IMR-90 (cell line): ENCODE measurements at regions of chr15 and their contacts with region 1.

Region 1: DNA sequence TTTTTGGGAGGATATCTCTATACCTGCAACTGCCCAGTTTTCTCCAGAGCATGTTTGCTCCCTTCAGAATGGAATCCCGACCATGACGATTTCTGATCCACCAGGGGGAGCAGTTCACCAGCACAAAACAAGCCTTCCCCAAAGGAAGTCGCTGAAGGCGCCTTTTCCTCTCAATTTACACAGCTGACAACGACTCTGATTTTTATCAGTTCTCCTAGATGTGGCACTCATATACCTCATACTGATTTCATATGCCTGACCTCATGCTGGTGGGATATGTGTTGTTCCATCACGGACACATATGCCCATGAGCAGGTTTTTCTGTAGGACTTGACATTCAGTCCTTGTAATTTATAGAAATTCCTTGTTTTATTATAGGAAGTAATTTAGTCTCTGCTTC is 1028.2 kb downstream of the MCTP2 start:
- DNase-seq: peak; percentile 83
- ATAC-seq: peak; percentile 70
- H3K4me3 ChIP-seq: no peak overlapping the region
- H3K27ac ChIP-seq: no peak overlapping the region
- H3K4me1 ChIP-seq: peaks cover 17% of the 10 kb centered on the region
- H3K27me3 ChIP-seq: no peaks in the 10 kb centered on the region
- CTCF ChIP-seq: peak; percentile 86
- POLR2A ChIP-seq: no peak; the same call in 1 of the 2 replicates
- RAD21 ChIP-seq: peak; percentile 98

Region 2: GRCh38 chr15:94607176-94607654 is 652.3 kb before region 1 on chr15:
- CTCF ChIA-PET with region 1: no interaction called
- POLR2A ChIA-PET with region 1: no interaction called
- dilution Hi-C with region 1: no loop called
- in situ Hi-C with region 1: no loop called
- intact Hi-C with region 1: no loop called
- DNase-seq: no peak
- ATAC-seq: no peak
- H3K4me3 ChIP-seq: no peak overlapping the region
- H3K27ac ChIP-seq: no peak overlapping the region
- H3K4me1 ChIP-seq: no peaks in the 10 kb centered on the region
- H3K27me3 ChIP-seq: no peaks in the 10 kb centered on the region
- CTCF ChIP-seq: no peak
- POLR2A ChIP-seq: no peak
- RAD21 ChIP-seq: no peak

Region 3: GRCh38 chr15:95025924-95026728 is 233.4 kb before region 1 on chr15:
- CTCF ChIA-PET with region 1: interaction called, 3 read pairs
- POLR2A ChIA-PET with region 1: no interaction called
- dilution Hi-C with region 1: no loop called
- in situ Hi-C with region 1: no loop called
- intact Hi-C with region 1: loop called (anchors 2 kb)
- DNase-seq: peak; percentile 61
- ATAC-seq: peak; percentile 93
- H3K4me3 ChIP-seq: no peak overlapping the region
- H3K27ac ChIP-seq: no peak overlapping the region
- H3K4me1 ChIP-seq: no peaks in the 10 kb centered on the region
- H3K27me3 ChIP-seq: peaks cover 2% of the 10 kb centered on the region; the same call in 1 of the 2 replicates
- CTCF ChIP-seq: peak; percentile 77
- POLR2A ChIP-seq: no peak
- RAD21 ChIP-seq: peak; percentile 81

Region 4: GRCh38 chr15:95409626-95410310 is 150.3 kb after region 1 on chr15:
- CTCF ChIA-PET with region 1: interaction called, 4 read pairs
- POLR2A ChIA-PET with region 1: no interaction called
- dilution Hi-C with region 1: no loop called
- in situ Hi-C with region 1: no loop called
- intact Hi-C with region 1: loop called (anchors 5 kb)
- DNase-seq: peak; percentile 32
- ATAC-seq: no peak
- H3K4me3 ChIP-seq: no peak overlapping the region
- H3K27ac ChIP-seq: no peak overlapping the region
- H3K4me1 ChIP-seq: peaks cover 6% of the 10 kb centered on the region
- H3K27me3 ChIP-seq: no peaks in the 10 kb centered on the region
- CTCF ChIP-seq: no peak
- POLR2A ChIP-seq: no peak
- RAD21 ChIP-seq: no peak

Region 5: DNA sequence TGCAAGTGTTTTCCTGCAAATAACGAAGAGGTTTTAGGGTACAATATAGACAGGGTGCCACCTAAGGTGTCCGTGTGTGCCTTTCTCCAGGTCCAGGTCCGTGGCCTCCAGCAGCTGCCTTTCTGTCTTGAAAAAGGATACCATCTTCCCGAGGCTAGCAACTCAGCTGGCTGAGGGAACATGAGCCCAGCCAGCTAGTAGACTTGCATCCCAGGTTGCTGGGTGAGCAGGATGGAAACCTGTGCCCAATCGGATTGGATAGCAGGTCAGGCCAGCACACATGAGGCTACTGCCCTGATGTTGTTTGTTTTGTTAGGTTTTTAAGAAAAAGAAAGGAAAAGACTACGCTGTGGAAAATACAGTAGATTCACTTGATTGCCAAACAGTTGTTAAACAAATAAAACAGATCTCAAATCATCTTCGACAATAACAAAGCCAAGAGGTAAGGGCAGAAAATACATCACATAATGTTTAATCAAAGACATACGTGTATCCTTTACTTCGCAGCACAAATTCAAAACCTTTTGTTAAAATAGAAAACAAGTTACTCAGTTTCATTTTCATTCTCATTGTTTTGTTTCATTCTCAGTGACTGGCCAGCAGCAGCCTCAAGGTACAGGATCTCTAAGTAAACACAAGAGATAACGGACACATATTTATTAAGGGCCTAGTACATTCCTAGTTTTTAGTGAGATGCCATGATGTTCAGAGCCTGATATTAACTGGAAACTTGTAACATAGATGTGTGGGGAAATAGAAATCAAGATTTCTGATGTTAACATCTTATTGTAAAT is 409.8 kb after region 1 on chr15:
- CTCF ChIA-PET with region 1: no interaction called
- POLR2A ChIA-PET with region 1: no interaction called
- dilution Hi-C with region 1: no loop called
- in situ Hi-C with region 1: no loop called
- intact Hi-C with region 1: loop called (anchors 10 kb)
- DNase-seq: no peak
- ATAC-seq: peak; percentile 40
- H3K4me3 ChIP-seq: no peak overlapping the region
- H3K27ac ChIP-seq: no peak overlapping the region
- H3K4me1 ChIP-seq: peaks cover 4% of the 10 kb centered on the region; the same call in 1 of the 2 replicates
- H3K27me3 ChIP-seq: no peaks in the 10 kb centered on the region
- CTCF ChIP-seq: no peak
- POLR2A ChIP-seq: no peak
- RAD21 ChIP-seq: no peak

Region 6: DNA sequence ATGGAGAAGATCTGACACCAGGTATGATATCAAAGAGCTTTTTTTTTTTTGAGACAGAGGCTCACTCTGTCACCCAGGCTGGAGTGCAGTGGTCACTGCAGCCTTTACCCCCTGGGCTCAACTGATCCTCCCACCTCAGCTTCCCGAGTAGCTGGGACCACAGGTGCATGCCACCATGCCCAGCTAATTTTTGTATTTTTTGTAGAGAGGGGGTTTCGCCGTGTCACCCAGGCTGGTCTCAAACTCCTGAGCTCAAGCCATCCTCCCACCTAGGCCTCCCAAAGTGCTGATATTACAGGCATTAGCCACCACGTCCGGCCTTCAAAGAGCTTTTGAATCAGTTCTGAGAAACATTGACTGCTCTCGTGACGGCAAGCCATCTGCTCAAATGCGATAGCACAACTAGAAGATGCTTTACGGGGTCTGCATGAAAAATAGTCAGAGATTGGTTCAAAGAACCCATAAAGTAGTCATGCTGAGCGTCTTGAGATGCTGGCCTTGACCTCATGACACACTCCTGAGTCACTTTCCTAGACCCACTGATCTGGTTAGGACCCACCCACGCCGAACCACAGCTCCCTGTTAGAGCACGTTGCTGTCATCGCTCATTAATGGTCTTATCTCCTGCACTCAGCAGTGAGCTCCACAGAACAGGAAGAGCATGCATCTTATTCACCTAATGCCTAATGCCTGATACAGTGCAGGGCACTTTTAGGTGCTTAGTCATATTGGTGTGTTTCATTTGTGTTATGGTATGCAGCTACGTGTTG is 1014.0 kb after region 1 on chr15:
- CTCF ChIA-PET with region 1: no interaction called
- POLR2A ChIA-PET with region 1: no interaction called
- dilution Hi-C with region 1: no loop called
- in situ Hi-C with region 1: no loop called
- intact Hi-C with region 1: loop called (anchors 5 kb)
- DNase-seq: peak; percentile 100
- ATAC-seq: peak; percentile 88
- H3K4me3 ChIP-seq: no peak overlapping the region
- H3K27ac ChIP-seq: peak overlapping the region; percentile 20
- H3K4me1 ChIP-seq: peaks cover 19% of the 10 kb centered on the region
- H3K27me3 ChIP-seq: no peaks in the 10 kb centered on the region
- CTCF ChIP-seq: no peak
- POLR2A ChIP-seq: peak; percentile 24; the same call in 1 of the 2 replicates
- RAD21 ChIP-seq: 0 out of 2 replicates have a peak, but pooled peaks have one; percentile 3

Region 7: GRCh38 chr15:97234851-97235610 is 1975.5 kb after region 1 on chr15:
- CTCF ChIA-PET with region 1: interaction called, 3 read pairs
- POLR2A ChIA-PET with region 1: no interaction called
- dilution Hi-C with region 1: no loop called
- in situ Hi-C with region 1: loop called (anchors 25 kb)
- intact Hi-C with region 1: loop called (anchors 2 kb)
- DNase-seq: peak; percentile 39
- ATAC-seq: peak; percentile 88
- H3K4me3 ChIP-seq: no peak overlapping the region
- H3K27ac ChIP-seq: no peak overlapping the region
- H3K4me1 ChIP-seq: no peaks in the 10 kb centered on the region
- H3K27me3 ChIP-seq: no peaks in the 10 kb centered on the region
- CTCF ChIP-seq: peak; percentile 78
- POLR2A ChIP-seq: no peak
- RAD21 ChIP-seq: peak; percentile 86